A673 (cell line): ENCODE measurements at regions of chr3 and their contacts with region 1.

Region 1: DNA sequence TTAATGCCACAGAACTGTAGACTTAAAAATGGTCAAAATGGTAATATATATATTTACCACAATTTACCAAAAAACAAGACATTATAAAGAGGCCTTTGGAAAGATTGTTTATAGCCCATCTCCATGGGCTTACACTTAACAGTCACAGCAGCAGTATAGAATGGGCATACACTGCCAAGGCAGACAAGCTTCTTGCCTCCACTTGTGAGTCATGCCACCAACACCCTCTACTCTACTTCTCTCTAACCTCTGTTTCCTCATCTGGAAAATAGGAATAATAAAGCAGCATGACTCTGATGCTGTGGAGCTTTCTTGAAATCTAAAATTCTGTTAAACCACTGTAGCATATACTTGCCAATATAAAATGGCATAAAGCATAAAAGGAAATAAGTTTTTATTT is 14.4 kb upstream of the GPR156 start:
- DNase-seq: no peak
- H3K4me3 ChIP-seq: no peak overlapping the region
- H3K27ac ChIP-seq: no peak overlapping the region
- H3K4me1 ChIP-seq: no peaks in the 10 kb centered on the region
- H3K27me3 ChIP-seq: no peaks in the 10 kb centered on the region
- CTCF ChIP-seq: no peak

Region 2: GRCh38 chr3:120275618-120276017 is 23.8 kb before region 1 on chr3:
- CTCF ChIA-PET with region 1: no interaction called
- POLR2A ChIA-PET with region 1: no interaction called
- intact Hi-C with region 1: loop called (anchors 2 kb)
- DNase-seq: no peak
- H3K4me3 ChIP-seq: no peak overlapping the region
- H3K27ac ChIP-seq: no peak overlapping the region
- H3K4me1 ChIP-seq: peaks cover 3% of the 10 kb centered on the region
- H3K27me3 ChIP-seq: no peaks in the 10 kb centered on the region
- CTCF ChIP-seq: no peak

Region 3: DNA sequence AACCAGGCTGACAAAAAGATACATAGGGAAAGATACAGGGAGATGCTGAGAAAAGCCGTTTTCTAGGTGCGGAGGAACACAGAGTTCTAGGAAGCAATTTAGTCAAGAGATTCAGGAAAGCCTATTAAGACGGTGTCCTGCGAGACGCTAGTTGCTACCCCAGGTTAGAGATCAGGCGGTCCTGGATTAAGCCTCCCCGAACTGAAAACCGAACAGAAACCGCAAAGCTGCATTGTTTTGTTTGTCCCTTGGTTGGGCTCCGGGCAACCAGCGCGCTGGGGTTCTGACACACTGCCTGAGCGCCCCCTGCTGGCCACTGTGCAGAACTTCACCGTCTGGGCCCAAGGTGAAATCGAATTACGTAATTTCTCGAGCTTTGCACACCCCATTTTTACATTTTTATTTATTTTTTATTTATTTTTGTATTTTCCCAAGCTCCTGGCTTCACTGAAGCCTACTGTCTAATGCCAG is 259.4 kb after region 1 on chr3:
- CTCF ChIA-PET with region 1: no interaction called
- POLR2A ChIA-PET with region 1: no interaction called
- intact Hi-C with region 1: no loop called
- DNase-seq: peak; percentile 86
- H3K4me3 ChIP-seq: peak overlapping the region; percentile 52
- H3K27ac ChIP-seq: no peak overlapping the region
- H3K4me1 ChIP-seq: peaks cover 5% of the 10 kb centered on the region
- H3K27me3 ChIP-seq: no peaks in the 10 kb centered on the region
- CTCF ChIP-seq: peak; percentile 96